PC-3 (cell line): ENCODE measurements at regions of chr20 and their contacts with region 1.

Region 1: DNA sequence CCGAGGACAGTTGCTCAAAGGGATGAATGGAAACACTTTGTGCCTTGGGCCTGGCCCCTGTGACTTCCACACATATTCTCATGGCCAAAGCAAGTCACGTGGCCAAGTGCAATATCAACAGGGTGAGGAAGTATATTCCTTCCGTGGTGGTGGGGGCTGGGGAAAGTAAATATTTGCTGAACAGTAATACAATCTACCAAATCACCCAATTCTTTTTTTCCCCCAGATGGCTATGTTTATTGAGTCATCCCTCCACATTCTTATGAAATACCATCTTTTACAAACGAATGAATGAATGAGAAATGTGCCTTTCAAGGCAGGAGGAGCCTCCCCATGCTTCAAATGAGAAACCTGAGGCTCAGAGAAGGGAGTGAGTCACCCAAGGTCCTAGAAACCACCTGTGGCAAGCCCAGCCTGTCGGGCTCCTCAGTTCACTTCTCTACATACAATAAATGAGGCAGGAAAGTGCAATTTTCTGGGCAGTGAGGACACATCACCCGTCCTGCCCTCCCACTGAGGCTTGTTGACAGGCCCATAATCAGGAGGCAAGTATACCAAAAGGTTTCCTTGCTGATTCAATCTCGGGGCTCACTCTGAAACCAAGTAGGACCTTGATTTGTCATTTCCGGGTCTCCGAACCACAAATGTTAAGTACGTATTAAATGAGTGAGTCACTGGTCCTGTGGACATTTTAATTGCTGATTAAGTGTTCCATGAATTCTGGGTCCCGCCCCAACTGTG is 25.3 kb upstream of the TOP1 start:
- DNase-seq: peak; percentile 99
- ATAC-seq: peak; percentile 71
- H3K4me3 ChIP-seq: peak overlapping the region; percentile 49
- H3K27ac ChIP-seq: peak overlapping the region; percentile 99
- H3K4me1 ChIP-seq: peaks cover 50% of the 10 kb centered on the region
- H3K27me3 ChIP-seq: no peaks in the 10 kb centered on the region
- CTCF ChIP-seq: no peak

Region 2: DNA sequence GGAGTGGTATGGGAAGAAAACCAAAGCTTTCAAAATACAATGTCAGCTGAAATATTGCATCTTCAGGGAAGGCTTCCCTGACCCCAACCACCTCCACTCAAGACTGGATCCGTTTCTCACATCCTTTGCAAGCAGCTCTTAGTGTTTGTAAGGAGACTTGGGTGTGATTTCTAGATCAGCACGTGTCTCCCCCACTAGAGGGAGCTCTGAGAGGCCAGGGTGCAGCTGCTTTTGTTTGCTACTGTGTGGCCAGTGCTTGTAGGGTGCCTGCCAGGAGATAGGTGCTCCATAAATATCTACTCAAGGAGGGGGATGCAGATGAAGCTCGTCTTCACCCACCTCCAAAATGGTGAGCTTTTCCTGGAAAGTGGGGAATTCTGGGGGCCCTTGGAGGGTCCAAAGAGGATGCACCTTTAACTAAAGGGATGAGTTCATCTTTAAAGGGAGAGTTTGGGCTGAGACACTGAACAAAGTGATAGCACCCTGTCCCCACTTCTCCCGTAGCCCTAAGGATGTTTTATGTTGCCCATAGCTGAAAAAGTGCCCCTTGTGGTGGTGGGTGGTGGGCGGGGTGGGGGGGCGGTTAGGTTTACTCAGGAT is 261.7 kb before region 1 on chr20:
- CTCF ChIA-PET with region 1: no interaction called
- POLR2A ChIA-PET with region 1: no interaction called
- intact Hi-C with region 1: no loop called
- DNase-seq: peak; percentile 59
- ATAC-seq: peak; percentile 53; the same call in 1 of the 2 replicates
- H3K4me3 ChIP-seq: no peak overlapping the region
- H3K27ac ChIP-seq: no peak overlapping the region
- H3K4me1 ChIP-seq: no peaks in the 10 kb centered on the region
- H3K27me3 ChIP-seq: peaks cover 63% of the 10 kb centered on the region
- CTCF ChIP-seq: peak; percentile 78

Region 3: GRCh38 chr20:41047975-41048305 is 44.6 kb after region 1 on chr20:
- CTCF ChIA-PET with region 1: no interaction called
- POLR2A ChIA-PET with region 1: no interaction called
- intact Hi-C with region 1: no loop called
- DNase-seq: peak; percentile 38
- ATAC-seq: peak; percentile 8
- H3K4me3 ChIP-seq: no peak overlapping the region
- H3K27ac ChIP-seq: no peak overlapping the region
- H3K4me1 ChIP-seq: peaks cover 27% of the 10 kb centered on the region; the same call in 1 of the 2 replicates
- H3K27me3 ChIP-seq: no peaks in the 10 kb centered on the region
- CTCF ChIP-seq: no peak

Region 4: GRCh38 chr20:41057999-41058896 is 54.9 kb after region 1 on chr20:
- CTCF ChIA-PET with region 1: no interaction called
- POLR2A ChIA-PET with region 1: interaction called, 3 read pairs
- intact Hi-C with region 1: loop called (anchors 1 kb)
- DNase-seq: peak; percentile 92
- ATAC-seq: peak; percentile 94
- H3K4me3 ChIP-seq: 0 out of 2 replicates have a peak overlapping the region, but pooled peaks have one; percentile 20
- H3K27ac ChIP-seq: peak overlapping the region; percentile 58
- H3K4me1 ChIP-seq: peaks cover 35% of the 10 kb centered on the region
- H3K27me3 ChIP-seq: no peaks in the 10 kb centered on the region
- CTCF ChIP-seq: no peak

Region 5: DNA sequence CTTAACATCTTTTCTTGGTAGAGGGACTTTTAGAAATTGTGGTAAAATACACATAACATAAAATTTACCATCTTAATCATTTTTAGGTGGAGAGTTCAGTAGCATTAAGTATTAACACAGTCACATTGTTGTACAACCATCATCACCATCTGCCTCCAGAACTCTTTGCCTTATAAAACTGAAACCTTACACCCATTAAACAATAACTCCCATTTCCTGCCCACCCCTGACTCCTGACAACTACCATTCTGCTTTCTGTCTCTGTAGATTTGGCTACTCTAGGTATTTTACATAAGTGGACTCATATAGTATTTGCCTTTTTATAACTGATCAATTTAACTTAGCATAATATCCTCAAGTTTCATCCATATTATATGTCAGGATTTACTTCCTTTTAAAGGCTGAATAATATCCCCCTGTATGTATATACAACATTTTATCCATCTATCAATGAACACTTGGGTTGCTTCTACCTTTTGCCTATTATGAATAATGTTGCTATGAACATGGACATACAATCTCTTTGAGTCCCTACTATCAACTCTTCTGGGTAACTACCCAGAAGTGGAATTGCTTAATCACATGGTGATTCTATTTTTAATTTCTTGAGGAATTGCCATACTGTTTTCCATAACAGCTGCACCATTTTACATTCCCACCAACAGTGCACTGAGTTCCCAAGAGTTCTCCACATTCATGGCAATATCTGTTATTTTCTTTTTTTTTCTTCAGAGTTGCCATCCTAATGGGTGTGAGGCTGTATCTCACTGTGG is 225.7 kb after region 1 on chr20:
- CTCF ChIA-PET with region 1: no interaction called
- POLR2A ChIA-PET with region 1: no interaction called
- intact Hi-C with region 1: no loop called
- DNase-seq: peak; percentile 31
- ATAC-seq: peak; percentile 66
- H3K4me3 ChIP-seq: no peak overlapping the region
- H3K27ac ChIP-seq: no peak overlapping the region
- H3K4me1 ChIP-seq: peaks cover 32% of the 10 kb centered on the region
- H3K27me3 ChIP-seq: no peaks in the 10 kb centered on the region
- CTCF ChIP-seq: no peak